ENCODE measurements at regions of chr18 and their contacts with region 1.

Region 1: GRCh38 chr18:31555971-31556747 is 35.5 kb upstream of the TTR start:
- DNase-seq: no peak
- H3K4me3 ChIP-seq: no peak overlapping the region
- CTCF ChIP-seq: no peak
- POLR2A ChIP-seq: no peak

Region 2: DNA sequence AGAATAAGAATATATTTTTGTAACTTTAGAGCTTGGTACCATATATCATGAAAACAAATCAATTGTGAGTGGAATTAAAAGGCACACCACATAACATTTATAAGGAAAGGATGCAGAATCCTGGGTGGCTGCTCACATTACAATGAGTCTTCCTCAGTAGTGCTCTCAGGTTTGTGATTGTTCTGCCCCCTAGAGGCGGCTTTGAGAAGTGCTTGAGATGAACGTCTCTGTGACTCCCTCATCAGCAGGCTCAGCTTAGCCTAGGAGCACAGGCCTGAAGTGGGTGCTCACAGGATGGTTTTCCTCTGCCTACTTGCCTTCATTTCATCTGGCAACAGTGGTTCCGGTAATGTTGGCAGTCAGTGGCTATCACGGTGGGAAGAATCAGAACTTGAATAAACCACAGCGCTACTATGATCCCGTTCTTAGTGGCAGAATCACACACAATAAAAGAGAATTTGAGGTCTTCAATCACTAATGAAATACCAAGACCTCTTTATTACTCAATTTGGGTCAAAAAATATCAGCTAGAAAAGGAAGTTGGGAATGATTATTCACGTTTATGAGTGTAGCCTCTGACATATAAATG is 166.3 kb after region 1 on chr18:
- intact Hi-C with region 1: loop called (anchors 10 kb)
- DNase-seq: peak; percentile 77 to 95
- H3K4me3 ChIP-seq: no peak overlapping the region
- CTCF ChIP-seq: no peak
- POLR2A ChIP-seq: no peak